ENCODE measurements at regions of chr11 and their contacts with region 1.

Region 1: DNA sequence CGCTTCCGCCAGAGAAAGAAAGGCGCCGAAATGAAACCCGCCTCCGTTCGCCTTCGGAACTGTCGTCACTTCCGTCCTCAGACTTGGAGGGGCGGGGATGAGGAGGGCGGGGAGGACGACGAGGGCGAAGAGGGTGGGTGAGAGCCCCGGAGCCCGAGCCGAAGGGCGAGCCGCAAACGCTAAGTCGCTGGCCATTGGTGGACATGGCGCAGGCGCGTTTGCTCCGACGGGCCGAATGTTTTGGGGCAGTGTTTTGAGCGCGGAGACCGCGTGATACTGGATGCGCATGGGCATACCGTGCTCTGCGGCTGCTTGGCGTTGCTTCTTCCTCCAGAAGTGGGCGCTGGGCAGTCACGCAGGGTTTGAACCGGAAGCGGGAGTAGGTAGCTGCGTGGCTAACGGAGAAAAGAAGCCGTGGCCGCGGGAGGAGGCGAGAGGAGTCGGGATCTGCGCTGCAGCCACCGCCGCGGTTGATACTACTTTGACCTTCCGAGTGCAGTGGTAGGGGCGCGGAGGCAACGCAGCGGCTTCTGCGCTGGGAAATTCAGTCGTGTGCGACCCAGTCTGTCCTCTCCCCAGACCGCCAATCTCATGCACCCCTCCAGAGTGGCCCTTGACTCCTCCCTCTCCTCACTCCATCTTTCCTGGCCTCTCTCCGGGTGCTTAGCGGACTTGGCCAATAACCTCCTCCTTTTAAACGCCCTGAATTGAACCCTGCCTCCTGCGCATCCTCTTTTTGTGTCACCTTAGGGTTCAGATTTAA is at the start of gene ATM:
- H3K4me3 Mint-ChIP-seq: no peak within 1 kb of the TSS
- H3K27ac Mint-ChIP-seq: no peak within 1 kb of the TSS
- H3K4me1 Mint-ChIP-seq: peaks cover 54% of the 10 kb centered on the region
- H3K27me3 Mint-ChIP-seq: no peaks in the 10 kb centered on the region

Region 2: DNA sequence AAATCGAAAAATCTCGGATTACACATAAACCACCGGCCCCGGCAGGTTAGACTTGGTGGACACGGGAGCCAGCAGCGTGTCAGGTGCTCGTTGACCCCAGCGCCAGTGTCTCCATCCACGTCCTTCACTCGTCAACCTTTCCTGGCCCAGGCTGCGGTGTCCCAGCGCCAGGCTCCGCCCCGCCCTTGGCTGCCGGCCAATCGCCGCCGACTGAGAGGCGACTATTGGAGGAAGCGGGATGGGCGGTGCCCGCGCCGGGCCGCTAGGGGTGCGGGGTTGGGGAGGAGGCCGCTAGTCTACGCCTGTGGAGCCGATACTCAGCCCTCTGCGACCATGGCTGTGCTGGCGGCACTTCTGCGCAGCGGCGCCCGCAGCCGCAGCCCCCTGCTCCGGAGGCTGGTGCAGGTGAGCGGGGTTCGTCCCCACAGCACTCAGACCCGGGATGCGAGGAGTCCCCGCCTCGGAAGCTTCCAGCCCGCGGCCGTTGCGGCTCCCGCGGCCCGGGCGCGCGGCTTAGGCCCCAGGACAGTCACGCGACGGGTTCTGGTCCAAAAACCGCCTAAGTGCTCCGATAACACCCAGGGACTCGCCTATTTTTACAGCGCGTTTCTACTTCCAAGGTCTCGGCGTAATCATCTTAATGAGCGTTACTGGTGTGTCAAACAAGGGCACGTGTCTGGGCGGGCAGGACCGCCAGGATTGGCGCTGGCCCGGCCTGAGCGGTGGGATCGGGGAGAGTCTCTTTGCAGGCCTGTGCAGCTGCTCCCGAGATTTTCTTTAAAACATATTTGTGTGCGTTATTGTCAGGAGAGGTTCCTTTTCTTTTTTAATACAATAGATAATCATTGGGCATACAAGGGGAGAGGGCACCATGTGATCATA is 101.4 kb before region 1 on chr11 and contains the start of gene ACAT1:
- intact Hi-C with region 1: loop called (anchors 10 kb)
- H3K4me3 Mint-ChIP-seq: peak within 1 kb of the TSS; percentile 79
- H3K27ac Mint-ChIP-seq: peak within 1 kb of the TSS; percentile 63
- H3K4me1 Mint-ChIP-seq: peaks cover 46% of the 10 kb centered on the region
- H3K27me3 Mint-ChIP-seq: no peaks in the 10 kb centered on the region

Region 3: DNA sequence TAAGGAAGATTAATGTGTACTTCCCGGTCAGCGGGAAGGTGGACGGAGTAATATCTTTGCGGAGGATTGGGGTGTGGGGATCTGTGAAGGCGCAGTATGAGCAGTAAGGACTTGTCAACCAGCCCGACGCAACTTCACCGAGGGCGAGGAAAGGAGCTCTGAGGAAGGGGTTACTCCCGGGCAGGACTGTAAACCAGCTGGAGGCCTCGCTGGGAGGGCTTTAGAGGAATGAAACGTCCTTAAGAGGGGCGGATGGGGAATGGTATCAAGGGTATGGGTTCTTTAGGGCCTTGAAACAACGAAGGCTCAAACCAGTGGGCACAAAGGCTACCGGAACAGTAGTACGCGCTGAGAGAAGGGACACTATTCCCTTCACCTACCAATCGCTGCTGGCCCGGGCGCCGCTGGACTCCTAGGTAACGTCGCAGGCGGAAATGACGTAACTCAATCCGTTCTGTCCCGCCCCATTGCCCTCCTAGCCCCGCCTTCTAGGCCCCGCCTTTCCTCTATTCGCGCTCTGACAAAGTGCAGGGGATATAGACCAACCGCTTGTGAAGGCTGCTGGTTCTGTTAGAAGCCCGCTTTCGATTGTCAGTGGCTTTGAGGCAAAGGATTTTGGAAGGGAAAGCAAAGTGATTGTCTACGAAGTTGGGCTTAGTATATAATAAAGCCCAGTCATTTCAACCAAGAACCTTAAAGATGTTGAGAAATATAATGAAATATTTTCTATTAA is 244.4 kb after region 1 on chr11 and contains the start of gene C11orf65:
- intact Hi-C with region 1: loop called (anchors 5 kb)
- H3K4me3 Mint-ChIP-seq: peak within 1 kb of the TSS; percentile 99
- H3K27ac Mint-ChIP-seq: peak within 1 kb of the TSS; percentile 100
- H3K4me1 Mint-ChIP-seq: peaks cover 25% of the 10 kb centered on the region
- H3K27me3 Mint-ChIP-seq: peaks cover 2% of the 10 kb centered on the region

Region 4: DNA sequence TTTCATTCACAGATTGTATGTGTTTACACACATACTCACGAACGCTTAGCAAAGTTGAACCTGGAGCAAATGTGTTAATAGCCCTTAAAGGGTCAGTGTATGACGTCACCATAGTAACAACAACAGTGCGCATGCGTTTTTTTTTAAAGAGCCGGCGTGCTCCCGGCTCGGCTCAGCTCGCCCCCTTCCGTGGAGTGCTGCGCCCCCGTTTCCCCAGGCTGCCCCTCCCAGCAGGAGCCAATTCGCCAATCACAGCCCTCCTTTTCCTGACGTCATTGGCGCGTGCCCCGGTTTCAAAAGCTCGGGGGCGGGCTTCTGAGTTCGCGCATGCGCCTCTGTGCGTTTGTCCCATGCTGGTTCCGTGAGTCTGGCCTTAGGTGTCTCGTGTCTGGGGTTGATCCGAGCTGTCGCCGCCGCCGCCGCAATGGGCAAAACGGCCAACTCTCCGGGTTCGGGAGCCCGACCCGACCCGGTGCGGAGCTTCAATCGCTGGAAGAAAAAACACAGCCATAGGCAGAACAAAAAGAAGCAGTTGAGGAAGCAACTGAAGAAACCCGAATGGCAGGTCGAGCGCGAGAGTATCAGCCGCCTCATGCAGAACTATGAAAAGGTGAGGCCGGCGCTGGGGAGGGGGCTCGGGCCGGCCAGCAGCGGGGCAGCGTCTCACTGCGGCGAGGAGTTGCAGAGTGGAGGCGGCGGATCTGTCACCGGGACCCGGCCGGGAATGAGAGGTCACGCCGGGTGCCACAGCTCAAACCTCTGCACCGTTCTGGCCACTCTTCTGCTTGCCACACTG is 442.1 kb after region 1 on chr11 and contains the start of gene DDX10:
- intact Hi-C with region 1: loop called (anchors 10 kb)
- H3K4me3 Mint-ChIP-seq: peak within 1 kb of the TSS; percentile 100
- H3K27ac Mint-ChIP-seq: peak within 1 kb of the TSS; percentile 86
- H3K4me1 Mint-ChIP-seq: peaks cover 45% of the 10 kb centered on the region
- H3K27me3 Mint-ChIP-seq: no peaks in the 10 kb centered on the region

Region 5: DNA sequence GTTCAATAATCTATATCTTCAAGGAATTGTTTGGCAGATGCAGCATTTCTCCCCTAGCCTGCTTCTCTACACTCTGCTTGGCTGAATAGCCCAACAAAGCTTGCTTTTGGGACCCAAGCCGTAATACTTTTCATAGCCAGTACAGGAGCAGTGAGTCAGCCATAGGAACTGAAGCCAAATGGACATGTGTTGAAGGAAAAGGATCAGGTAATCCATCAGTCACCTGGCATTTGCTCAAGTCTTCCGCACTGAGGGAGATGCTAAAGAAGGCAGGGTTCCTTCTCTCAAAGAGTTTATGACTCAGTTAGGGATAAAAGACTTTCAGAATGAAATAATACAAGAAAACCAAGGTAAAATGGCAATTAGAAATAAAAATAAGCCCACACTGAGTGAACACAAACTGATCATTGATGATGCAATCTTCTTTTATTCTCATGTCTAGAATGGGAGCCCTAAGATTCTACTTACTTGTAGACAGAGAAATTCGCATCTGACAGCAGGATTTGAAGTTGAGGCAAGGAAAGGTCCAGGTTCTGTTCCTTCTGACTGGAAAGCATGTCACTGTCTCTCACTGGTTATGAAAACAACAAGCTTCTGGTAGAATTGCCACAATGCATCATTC is 1212.4 kb after region 1 on chr11:
- intact Hi-C with region 1: no loop called
- H3K4me3 Mint-ChIP-seq: no peak overlapping the region
- H3K27ac Mint-ChIP-seq: no peak overlapping the region
- H3K4me1 Mint-ChIP-seq: no peaks in the 10 kb centered on the region
- H3K27me3 Mint-ChIP-seq: no peaks in the 10 kb centered on the region